ENCODE measurements at regions of chr15 and their contacts with region 1.

Region 1: GRCh38 chr15:57654153-57654852 is 52.2 kb upstream of the POLR2M start:
- DNase-seq: no peak
- H3K4me3 ChIP-seq: no peak overlapping the region
- H3K27ac ChIP-seq: no peak overlapping the region
- H3K4me1 ChIP-seq: no peaks in the 10 kb centered on the region
- H3K27me3 ChIP-seq: no peaks in the 10 kb centered on the region
- CTCF ChIP-seq: no peak
- EP300 ChIP-seq: no peak
- POLR2A ChIP-seq: no peak

Region 2: GRCh38 chr15:57751177-57751800 is 97.0 kb after region 1 on chr15:
- intact Hi-C with region 1: no loop called
- DNase-seq: no peak
- H3K4me3 ChIP-seq: no peak overlapping the region
- H3K27ac ChIP-seq: no peak overlapping the region
- H3K4me1 ChIP-seq: peaks cover 7% of the 10 kb centered on the region
- H3K27me3 ChIP-seq: no peaks in the 10 kb centered on the region
- CTCF ChIP-seq: peak in 2 of 3 donors; percentile 28 to 36
- EP300 ChIP-seq: no peak
- POLR2A ChIP-seq: no peak

Region 3: GRCh38 chr15:57861036-57861638 is 206.8 kb after region 1 on chr15:
- intact Hi-C with region 1: loop called in 1 of 4 experiments (anchors 10 kb)
- DNase-seq: no peak
- H3K4me3 ChIP-seq: no peak overlapping the region
- H3K27ac ChIP-seq: no peak overlapping the region
- H3K4me1 ChIP-seq: no peaks in the 10 kb centered on the region
- H3K27me3 ChIP-seq: no peaks in the 10 kb centered on the region
- CTCF ChIP-seq: peak; percentile 40 to 56 (median 48)
- EP300 ChIP-seq: no peak
- POLR2A ChIP-seq: no peak